Activated CD8-positive, alpha-beta T cell treated with anti-CD3 and anti-CD28 coated beads, Interleukin-2, amount 10 ng/mL, durations not matched to agents 7 days and 5 days (primary cell): ENCODE measurements at regions of chr12 and their contacts with region 1.

Region 1: DNA sequence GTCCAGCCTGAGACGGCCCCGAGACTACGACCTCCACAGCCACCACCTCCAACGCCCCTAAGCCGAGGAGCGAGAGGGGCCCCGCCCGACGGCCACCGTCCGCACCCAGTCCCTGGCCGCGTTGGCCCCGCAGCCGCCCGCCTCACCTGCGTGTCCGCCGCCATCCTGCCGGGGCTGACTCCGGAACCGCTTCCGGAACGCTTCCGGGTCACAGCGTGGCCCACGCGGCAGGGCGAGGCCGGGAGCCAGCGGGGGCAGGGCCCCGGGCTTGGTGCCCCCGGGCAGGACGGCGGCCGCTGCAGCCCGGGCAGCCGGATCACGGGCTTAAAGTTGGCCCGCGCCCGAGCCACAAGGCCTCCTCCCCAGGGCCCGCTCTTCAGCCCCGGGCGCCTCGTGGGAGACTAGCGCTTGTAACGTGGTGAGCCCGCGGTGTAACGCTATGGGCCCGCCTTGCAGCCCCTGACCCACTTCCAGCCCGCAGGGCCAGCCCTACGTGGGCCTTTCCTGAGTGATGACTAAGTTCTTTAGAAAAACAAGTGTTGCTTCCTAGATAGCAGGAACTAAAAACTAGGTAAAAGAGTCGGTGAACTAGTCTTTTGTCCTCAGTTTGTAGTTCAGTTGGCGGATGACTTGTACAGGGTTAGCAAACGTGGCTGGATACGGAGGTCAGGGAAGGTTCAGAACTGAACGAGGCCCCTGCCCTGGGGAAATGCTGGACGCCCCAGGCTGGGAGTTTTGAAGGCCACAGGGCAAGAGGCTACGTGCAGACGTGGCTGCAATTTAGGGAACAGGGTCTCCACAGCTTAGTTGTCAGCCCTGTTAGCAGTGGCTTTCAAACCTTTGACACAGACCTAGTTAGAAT is at the start of gene GCN1:
- DNase-seq: peak; percentile 88
- ATAC-seq: peak; percentile 84
- H3K4me3 Mint-ChIP-seq: peak within 1 kb of the TSS; percentile 89
- H3K27ac Mint-ChIP-seq: peak within 1 kb of the TSS; percentile 93
- H3K4me1 Mint-ChIP-seq: peaks cover 57% of the 10 kb centered on the region
- H3K27me3 Mint-ChIP-seq: no peaks in the 10 kb centered on the region
- total RNA-seq, gene GCN1: 109 to 112 TPM

Region 2: GRCh38 chr12:120086801-120087621 is 107.8 kb before region 1 on chr12:
- CTCF ChIA-PET with region 1: no interaction called
- POLR2A ChIA-PET with region 1: no interaction called
- DNase-seq: peak; percentile 100
- ATAC-seq: peak; percentile 97
- H3K4me3 Mint-ChIP-seq: peak overlapping the region; percentile 72
- H3K27ac Mint-ChIP-seq: peak overlapping the region; percentile 84
- H3K4me1 Mint-ChIP-seq: peaks cover 28% of the 10 kb centered on the region
- H3K27me3 Mint-ChIP-seq: no peaks in the 10 kb centered on the region

Region 3: GRCh38 chr12:120110550-120111501 is 83.9 kb before region 1 on chr12:
- CTCF ChIA-PET with region 1: interaction called, 28 read pairs
- POLR2A ChIA-PET with region 1: interaction called, 82 read pairs
- DNase-seq: peak; percentile 69
- ATAC-seq: peak; percentile 85
- H3K4me3 Mint-ChIP-seq: peak overlapping the region; percentile 69
- H3K27ac Mint-ChIP-seq: peak overlapping the region; percentile 82
- H3K4me1 Mint-ChIP-seq: peaks cover 70% of the 10 kb centered on the region
- H3K27me3 Mint-ChIP-seq: no peaks in the 10 kb centered on the region

Region 4: GRCh38 chr12:120116792-120117651 is 77.7 kb before region 1 on chr12:
- CTCF ChIA-PET with region 1: interaction called, 28 read pairs
- POLR2A ChIA-PET with region 1: interaction called, 82 read pairs
- DNase-seq: peak; percentile 98
- ATAC-seq: peak; percentile 83
- H3K4me3 Mint-ChIP-seq: peak overlapping the region; percentile 81
- H3K27ac Mint-ChIP-seq: peak overlapping the region; percentile 78
- H3K4me1 Mint-ChIP-seq: peaks cover 78% of the 10 kb centered on the region
- H3K27me3 Mint-ChIP-seq: no peaks in the 10 kb centered on the region

Region 5: GRCh38 chr12:120181991-120182631 is 12.7 kb before region 1 on chr12:
- CTCF ChIA-PET with region 1: no interaction called
- POLR2A ChIA-PET with region 1: interaction called, 17 read pairs
- DNase-seq: no peak
- ATAC-seq: no peak
- H3K4me3 Mint-ChIP-seq: no peak overlapping the region
- H3K27ac Mint-ChIP-seq: peak overlapping the region; percentile 25
- H3K4me1 Mint-ChIP-seq: peaks cover 4% of the 10 kb centered on the region
- H3K27me3 Mint-ChIP-seq: no peaks in the 10 kb centered on the region

Region 6: DNA sequence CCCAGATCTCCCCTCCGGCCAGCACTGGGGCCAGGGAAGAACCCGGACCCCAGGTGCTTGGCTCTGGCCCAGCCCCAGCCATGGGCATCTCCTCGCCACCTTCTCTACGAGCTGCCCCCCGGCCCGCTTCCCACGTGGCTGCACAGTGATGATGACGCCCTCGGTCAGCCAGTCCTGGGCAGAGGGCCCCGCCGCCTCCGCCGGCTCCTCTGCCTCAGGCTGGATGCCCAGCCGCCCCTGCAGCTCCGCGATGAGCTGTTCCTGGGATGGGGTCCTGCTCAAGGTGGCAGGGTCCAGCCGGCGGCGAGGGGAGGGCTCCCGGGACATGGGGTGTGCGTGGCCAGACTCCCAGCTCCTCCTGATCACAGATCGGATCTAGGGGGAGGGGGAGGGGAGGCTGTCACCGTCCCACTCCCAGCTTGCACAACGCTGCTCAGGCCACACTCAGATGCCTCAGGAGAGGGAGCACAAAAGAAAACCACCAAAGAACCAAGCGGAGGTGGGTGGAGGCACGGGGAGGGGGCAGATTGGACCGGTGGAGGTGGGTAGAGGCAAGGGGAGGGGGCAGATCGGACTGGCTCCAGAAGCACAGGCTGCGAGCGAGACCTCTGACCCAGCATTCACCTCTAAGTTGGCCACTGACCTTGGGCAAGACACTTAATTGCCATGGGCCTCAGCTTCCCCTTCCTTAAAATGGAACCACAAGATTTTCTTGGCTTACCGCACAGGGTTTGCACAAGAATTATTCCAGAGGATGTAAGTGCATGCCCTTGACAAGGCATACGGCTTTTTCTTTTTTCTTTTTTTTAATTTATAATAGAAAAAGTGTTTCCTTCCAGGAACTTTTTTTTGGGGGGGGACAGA is 22.2 kb after region 1 on chr12:
- CTCF ChIA-PET with region 1: no interaction called
- POLR2A ChIA-PET with region 1: interaction called, 39 read pairs
- DNase-seq: no peak
- ATAC-seq: no peak
- H3K4me3 Mint-ChIP-seq: no peak overlapping the region
- H3K27ac Mint-ChIP-seq: no peak overlapping the region
- H3K4me1 Mint-ChIP-seq: no peaks in the 10 kb centered on the region
- H3K27me3 Mint-ChIP-seq: no peaks in the 10 kb centered on the region

Region 7: GRCh38 chr12:120249875-120250795 is 55.4 kb after region 1 on chr12:
- CTCF ChIA-PET with region 1: no interaction called
- POLR2A ChIA-PET with region 1: interaction called, 22 read pairs
- DNase-seq: peak; percentile 72
- ATAC-seq: peak; percentile 10
- H3K4me3 Mint-ChIP-seq: peak overlapping the region; percentile 67
- H3K27ac Mint-ChIP-seq: peak overlapping the region; percentile 90
- H3K4me1 Mint-ChIP-seq: peaks cover 77% of the 10 kb centered on the region
- H3K27me3 Mint-ChIP-seq: peaks cover 10% of the 10 kb centered on the region